ENCODE measurements at regions of chr17 and their contacts with region 1.

Region 1: DNA sequence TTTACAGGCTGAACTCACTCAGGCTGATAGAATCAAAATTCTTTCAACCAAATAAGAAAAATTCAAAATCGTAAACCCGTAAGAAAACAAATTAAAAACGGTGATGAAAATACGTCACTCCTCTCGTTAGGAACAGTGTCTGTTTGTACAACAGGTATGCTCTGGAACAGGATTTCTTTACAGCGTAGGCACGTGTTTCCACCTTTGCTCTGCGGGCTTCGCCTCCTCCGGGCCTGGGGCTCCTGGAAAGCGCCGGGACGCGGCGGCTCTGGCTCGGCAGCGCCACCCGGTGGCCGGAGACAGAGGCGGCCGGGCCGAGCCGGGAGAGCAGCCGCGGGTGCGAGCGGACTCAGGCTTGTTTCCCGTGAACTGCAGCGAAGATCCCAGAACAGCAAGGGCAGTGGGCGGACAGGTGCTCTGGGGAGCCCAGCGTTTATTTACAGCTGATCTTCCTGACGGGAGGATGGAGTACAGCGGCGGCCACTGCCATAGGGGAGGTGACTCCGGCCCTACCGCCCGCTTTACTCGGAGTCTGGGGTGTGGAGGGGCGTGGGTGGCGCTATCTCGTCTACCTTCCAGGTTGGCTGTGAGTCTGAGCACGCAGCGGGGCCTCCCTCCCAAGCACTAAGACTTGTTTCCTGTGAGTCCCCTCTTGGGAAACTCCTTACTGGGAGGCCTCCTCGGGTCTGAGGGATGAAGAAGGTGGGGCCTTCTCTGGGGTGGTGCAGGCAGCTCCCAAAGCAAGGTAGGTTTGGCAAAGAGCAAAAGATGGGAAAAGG is 40.5 kb upstream of the ATP2A3 start:
- DNase-seq: peak; percentile 65
- H3K4me3 Mint-ChIP-seq: no peak overlapping the region
- H3K27ac Mint-ChIP-seq: no peak overlapping the region
- H3K4me1 Mint-ChIP-seq: peaks cover 6% of the 10 kb centered on the region
- H3K27me3 Mint-ChIP-seq: no peaks in the 10 kb centered on the region

Region 2: GRCh38 chr17:3865176-3865575 is 139.5 kb before region 1 on chr17:
- CTCF ChIA-PET with region 1: interaction called, 5 read pairs
- POLR2A ChIA-PET with region 1: no interaction called
- intact Hi-C with region 1: loop called (anchors 1 kb)
- DNase-seq: no peak
- H3K4me3 Mint-ChIP-seq: no peak overlapping the region
- H3K27ac Mint-ChIP-seq: no peak overlapping the region
- H3K4me1 Mint-ChIP-seq: no peaks in the 10 kb centered on the region
- H3K27me3 Mint-ChIP-seq: no peaks in the 10 kb centered on the region

Region 3: DNA sequence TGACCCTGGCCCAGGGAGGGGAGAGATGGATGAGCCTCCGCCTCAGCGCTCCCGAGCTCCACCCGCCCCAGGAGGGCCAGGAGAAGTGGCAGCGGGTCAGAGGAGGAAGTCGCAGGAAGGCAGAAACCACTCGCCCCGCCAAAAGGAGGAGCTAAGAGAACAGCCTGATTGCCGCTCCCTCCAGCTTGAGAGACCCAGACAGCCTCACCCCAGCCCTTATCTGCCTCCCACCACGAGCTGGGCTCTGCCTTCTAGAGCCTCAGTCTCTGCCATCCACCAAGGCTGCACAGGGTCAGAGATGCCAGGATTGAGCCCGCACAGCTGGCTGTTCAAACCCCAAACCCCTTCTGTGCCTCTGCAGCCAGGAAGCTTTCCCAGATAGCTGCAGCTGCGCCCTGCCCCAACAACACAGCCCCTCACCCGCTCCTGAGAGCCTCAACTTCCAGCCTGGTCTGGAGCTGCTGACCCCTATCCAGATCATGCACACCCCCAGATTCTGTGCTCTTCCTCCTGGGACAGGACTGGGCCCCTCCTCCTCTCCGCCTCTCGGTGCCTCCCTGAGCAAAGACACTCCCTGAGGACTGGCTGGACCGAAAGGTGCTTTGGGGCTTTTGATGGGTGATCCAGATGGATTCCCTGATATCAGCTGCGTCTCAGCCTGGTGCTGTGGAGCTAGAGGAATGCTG is 39.4 kb before region 1 on chr17:
- CTCF ChIA-PET with region 1: interaction called, 10 read pairs
- POLR2A ChIA-PET with region 1: no interaction called
- intact Hi-C with region 1: loop called (anchors 5 kb)
- DNase-seq: peak; percentile 87
- H3K4me3 Mint-ChIP-seq: peak overlapping the region; percentile 85
- H3K27ac Mint-ChIP-seq: peak overlapping the region; percentile 85
- H3K4me1 Mint-ChIP-seq: peaks cover 43% of the 10 kb centered on the region
- H3K27me3 Mint-ChIP-seq: no peaks in the 10 kb centered on the region

Region 4: DNA sequence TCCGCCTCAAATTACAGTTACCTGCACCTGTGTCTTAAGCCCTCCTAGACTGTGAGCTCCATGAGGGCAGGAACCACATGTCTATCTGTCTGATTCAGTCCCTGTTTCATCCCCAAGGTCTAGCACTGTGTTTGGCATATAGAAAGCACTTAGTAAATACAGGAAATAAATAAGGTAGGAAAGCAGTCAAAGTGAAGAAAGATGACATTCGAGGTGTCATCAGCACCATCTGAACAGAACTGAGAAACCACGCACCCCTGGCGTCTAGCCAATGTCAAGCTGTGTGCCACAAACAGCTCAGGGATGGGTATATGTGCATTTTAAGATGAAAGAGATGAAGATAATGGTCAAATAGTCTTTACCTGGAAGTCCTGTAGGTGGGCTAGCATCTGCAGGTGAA is 39.2 kb after region 1 on chr17:
- CTCF ChIA-PET with region 1: no interaction called
- POLR2A ChIA-PET with region 1: no interaction called
- intact Hi-C with region 1: no loop called
- DNase-seq: peak; percentile 86
- H3K4me3 Mint-ChIP-seq: no peak overlapping the region
- H3K27ac Mint-ChIP-seq: peak overlapping the region; percentile 44
- H3K4me1 Mint-ChIP-seq: peaks cover 31% of the 10 kb centered on the region
- H3K27me3 Mint-ChIP-seq: no peaks in the 10 kb centered on the region